Endothelial cell of umbilical vein (primary cell): ENCODE measurements at regions of chr9 and their contacts with region 1.

Region 1: DNA sequence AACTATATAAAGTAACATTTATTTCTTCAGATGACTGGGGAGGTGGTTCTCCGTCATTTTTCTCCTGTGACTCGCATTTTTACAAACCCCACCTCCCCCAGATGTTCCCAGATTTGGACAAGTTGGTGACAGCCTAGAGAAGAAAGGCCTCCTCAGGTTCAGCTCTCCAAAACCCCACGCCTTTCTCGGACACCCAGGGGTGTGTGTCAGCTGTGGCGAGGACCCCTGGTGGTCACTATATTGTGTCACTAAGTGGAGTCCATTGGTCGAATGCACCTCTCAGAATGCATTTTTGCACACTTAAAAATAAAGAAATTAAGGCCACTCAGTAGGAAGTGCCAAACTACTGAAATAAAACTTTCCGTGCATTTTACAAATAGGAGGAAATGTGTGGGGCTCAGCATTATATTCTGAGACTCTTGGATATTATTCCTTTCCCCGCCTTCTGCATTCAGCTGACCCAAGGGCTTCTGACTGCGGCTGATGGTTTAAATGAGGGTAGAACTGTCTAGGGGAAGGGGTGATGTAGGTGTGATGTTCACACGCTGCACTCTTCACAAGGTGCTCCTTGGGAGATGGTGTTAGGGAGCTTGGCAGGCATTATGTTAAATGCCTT is 47.6 kb downstream of the ACO1 start:
- DNase-seq: peak; percentile 54
- H3K4me3 ChIP-seq: no peak overlapping the region
- H3K27ac ChIP-seq: peak overlapping the region; percentile 93
- H3K4me1 ChIP-seq: peaks cover 34% of the 10 kb centered on the region
- H3K27me3 ChIP-seq: no peaks in the 10 kb centered on the region
- CTCF ChIP-seq: peak; percentile 63 to 67
- POLR2A ChIP-seq: no peak

Region 2: DNA sequence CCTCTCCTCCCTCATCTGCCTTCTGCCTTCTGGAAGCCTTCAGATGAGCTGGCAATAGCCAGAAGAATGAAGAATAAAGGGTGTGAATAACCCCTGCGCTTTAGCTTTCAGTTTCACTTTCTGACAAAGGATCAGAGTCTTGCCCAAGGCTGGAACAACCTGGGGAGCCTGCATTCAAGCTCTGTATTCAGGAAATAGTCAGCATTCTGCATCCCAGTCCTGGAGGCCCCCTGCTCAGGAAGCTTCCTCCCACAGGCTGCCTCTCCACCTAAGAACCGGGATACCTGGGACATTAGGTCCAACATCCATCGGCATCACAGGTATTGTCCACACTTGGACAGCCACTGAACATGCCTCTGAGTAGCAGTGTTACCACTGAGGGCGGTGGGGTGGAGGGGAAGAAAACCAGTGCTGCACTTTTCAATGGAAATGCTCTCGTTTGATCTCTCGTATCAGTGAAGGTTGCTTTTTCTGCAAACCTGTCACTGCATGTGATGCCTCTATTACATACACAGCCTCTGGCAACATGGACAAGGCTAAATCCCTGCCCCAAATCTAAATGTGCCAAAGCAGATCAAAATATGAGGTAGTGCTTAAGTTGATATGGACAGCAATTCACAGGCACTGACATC is 87.4 kb before region 1 on chr9:
- CTCF ChIA-PET with region 1: no interaction called
- POLR2A ChIA-PET with region 1: no interaction called
- dilution Hi-C with region 1: no loop called
- intact Hi-C with region 1: no loop called
- DNase-seq: peak; percentile 24
- H3K4me3 ChIP-seq: no peak overlapping the region
- H3K27ac ChIP-seq: no peak overlapping the region
- H3K4me1 ChIP-seq: no peaks in the 10 kb centered on the region
- H3K27me3 ChIP-seq: peaks cover under 1 to 3% of the 10 kb centered on the region in 2 experiments
- CTCF ChIP-seq: no peak
- POLR2A ChIP-seq: no peak

Region 3: DNA sequence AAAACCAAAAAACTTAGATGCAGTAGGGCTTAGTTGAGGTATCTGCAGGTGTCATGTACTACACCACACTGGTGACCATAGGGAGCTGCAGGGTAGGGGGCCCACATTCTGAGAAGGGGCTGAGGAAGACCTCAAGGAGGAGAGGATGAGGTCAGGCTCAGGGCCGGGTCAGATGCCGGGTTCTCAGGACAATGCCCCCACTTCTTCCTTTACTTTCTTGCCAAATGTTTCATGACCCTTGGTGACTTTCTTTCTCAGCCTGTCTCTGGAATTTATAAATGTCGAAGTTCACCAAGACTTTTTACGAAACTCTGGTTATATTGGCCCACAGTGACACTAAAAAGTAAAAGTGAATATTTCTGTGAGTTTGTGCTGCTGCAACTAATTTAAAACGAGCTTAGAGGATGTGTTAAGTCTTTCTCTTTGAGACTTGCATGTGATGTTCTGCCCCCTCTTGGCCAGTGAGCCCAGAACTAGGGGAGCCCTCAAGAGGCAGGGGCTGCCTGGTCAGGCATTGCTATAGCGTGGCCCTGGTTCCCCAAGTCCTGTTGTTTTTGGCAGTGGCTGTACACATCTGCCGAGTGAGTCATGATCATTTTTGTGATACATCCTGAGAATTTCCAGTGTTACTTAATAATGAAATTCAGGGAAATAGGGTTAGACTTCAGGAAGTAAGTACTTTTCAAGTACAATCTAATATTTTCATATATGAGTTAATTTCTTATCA is 36.4 kb before region 1 on chr9:
- CTCF ChIA-PET with region 1: interaction called, 21 read pairs
- POLR2A ChIA-PET with region 1: no interaction called
- dilution Hi-C with region 1: no loop called
- intact Hi-C with region 1: loop called (anchors 1 kb)
- DNase-seq: peak; percentile 95
- H3K4me3 ChIP-seq: no peak overlapping the region
- H3K27ac ChIP-seq: peak overlapping the region; percentile 60
- H3K4me1 ChIP-seq: peaks cover 29% of the 10 kb centered on the region
- H3K27me3 ChIP-seq: no peaks in the 10 kb centered on the region
- CTCF ChIP-seq: peak; percentile 20 to 46
- POLR2A ChIP-seq: peak; percentile 31

Region 4: DNA sequence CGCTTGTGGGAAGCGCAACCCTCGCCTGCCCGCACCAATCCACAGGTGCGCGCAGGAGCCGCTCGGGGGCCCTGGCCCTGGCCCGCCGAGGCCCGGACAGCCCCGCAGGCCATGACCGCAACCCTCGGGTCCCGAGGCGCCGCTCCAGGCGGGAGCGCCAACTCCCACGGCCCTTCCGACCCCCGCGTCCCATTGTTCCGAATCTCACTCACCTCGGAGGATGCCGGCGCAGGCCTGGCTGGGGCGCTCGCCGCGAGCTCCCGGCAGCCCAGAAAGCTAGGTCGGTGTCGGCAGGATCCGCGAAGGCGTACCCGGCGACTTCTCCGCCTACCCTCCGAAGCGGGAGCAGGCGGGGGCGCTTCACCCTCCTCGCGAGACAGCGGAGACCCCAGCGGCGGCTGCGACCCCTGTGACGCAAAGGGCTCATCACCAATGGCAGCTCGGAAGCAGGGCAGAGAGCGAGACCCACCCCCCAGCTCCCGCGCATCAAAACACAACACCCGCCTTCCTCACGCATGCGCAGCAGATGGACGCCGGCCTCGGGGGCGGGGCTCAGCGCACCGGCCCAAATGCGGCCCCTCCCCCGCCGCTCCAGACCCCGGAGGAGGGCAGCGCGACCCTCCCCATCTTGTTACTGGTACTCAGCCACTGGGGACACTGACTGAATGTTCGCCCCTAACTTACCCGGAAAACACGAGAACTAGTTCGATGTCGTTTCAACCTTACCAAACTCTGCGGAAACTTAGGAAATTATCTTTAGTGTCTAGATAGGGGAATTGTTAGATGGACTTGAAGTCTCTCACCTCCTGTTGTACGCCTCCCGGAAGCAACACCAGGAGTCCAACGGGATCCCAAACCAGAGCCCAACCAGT is 118.8 kb after region 1 on chr9:
- CTCF ChIA-PET with region 1: interaction called, 4 read pairs
- POLR2A ChIA-PET with region 1: no interaction called
- dilution Hi-C with region 1: no loop called
- intact Hi-C with region 1: loop called (anchors 2 kb)
- DNase-seq: peak; percentile 98
- H3K4me3 ChIP-seq: peak overlapping the region; percentile 71 to 88 (median 77)
- H3K27ac ChIP-seq: peak overlapping the region; percentile 92
- H3K4me1 ChIP-seq: peaks cover 17% of the 10 kb centered on the region
- H3K27me3 ChIP-seq: no peaks in the 10 kb centered on the region
- CTCF ChIP-seq: peak in 1 of 2 donors; percentile 22
- POLR2A ChIP-seq: no peak

Region 5: GRCh38 chr9:32579706-32580331 is 147.8 kb after region 1 on chr9:
- CTCF ChIA-PET with region 1: interaction called, 16 read pairs
- POLR2A ChIA-PET with region 1: no interaction called
- dilution Hi-C with region 1: no loop called
- intact Hi-C with region 1: no loop called
- DNase-seq: peak; percentile 67
- H3K4me3 ChIP-seq: no peak overlapping the region
- H3K27ac ChIP-seq: no peak overlapping the region
- H3K4me1 ChIP-seq: peaks cover 9% of the 10 kb centered on the region
- H3K27me3 ChIP-seq: peaks cover 8 to 10% of the 10 kb centered on the region in 2 experiments
- CTCF ChIP-seq: peak; percentile 85 to 89
- POLR2A ChIP-seq: no peak

Region 6: DNA sequence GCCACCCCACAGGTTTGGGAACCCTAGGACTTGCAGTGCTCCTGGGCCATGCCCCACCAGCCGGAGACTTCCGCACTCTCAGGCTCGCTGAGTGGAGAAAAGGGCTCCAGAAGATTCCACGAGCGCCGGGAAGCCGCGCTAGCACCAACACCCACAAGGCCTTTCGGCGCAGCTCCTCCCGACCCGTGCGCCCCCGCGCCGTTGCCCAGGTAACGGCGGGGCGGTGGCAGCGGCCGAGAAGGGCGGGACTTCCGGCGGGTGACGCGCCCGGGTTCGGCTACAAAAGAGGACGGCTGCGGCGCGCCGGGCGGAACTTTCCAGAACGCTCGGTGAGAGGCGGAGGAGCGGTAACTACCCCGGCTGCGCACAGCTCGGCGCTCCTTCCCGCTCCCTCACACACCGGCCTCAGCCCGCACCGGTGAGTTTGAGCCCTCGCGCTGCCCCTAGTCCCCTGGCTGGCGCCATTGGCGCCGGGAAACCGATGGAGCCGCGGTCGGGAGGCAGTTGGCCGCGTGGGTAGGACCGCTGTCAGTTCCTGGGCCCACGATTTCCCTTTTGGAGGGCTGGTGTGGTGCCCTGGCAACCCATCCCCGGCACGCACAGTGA is 593.0 kb after region 1 on chr9 and contains the start of gene DNAJA1:
- CTCF ChIA-PET with region 1: no interaction called
- POLR2A ChIA-PET with region 1: interaction called, 3 read pairs
- dilution Hi-C with region 1: no loop called
- intact Hi-C with region 1: loop called (anchors 1 kb)
- DNase-seq: peak; percentile 92
- H3K4me3 ChIP-seq: peak within 1 kb of the TSS; percentile 57 to 100 (median 99)
- H3K27ac ChIP-seq: peak within 1 kb of the TSS; percentile 95
- H3K4me1 ChIP-seq: peaks cover 40% of the 10 kb centered on the region
- H3K27me3 ChIP-seq: no peaks in the 10 kb centered on the region
- CTCF ChIP-seq: no peak
- POLR2A ChIP-seq: peak; percentile 99
- total RNA-seq, gene DNAJA1: 177 and 182 TPM in 2 replicates